Activated CD4-positive, alpha-beta memory T cell treated with anti-CD3 and anti-CD28 coated beads for 36 hours (primary cell): ENCODE measurements at regions of chr7 and their contacts with region 1.

Region 1: DNA sequence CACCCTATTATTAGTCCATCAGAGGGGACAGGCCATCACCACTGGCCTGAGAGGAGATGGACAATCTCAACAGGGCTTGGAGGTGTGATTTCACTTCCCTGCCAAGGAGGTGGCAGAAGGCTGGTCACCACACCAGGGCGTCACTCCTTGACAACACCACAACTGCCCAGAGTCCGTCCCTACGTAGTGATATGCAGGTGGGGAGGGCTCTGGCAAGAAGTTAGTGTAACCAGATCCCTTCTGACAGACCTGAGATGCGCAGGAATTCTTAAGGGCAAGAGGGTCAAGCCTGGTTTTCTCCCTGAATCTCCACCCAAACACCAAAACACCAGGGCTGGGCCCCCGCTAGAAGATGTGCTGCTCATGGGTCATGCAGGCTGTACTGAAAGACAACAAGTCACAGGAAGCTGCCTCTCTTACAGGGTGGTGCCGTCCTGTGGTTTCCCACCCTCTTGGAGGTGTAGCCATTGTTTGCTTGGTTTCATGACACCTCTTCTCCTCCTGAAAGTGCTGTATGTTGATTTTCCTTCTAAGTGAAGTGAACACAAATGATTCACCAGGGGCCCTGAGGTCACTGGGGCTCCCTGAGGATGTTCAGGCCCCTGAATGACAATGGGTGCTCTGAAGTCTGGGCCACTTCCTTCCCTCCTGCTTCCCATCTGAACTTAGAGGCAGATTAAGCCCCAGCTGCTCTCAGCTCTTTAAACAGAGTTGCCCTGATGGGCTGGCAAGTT is 27.1 kb downstream of the ATXN7L1 start:
- DNase-seq: peak; percentile 87
- H3K4me3 Mint-ChIP-seq: peak overlapping the region; percentile 11
- H3K27ac Mint-ChIP-seq: peak overlapping the region; percentile 68
- H3K4me1 Mint-ChIP-seq: peaks cover 46% of the 10 kb centered on the region
- H3K27me3 Mint-ChIP-seq: no peaks in the 10 kb centered on the region

Region 2: GRCh38 chr7:105782391-105783042 is 66.8 kb before region 1 on chr7:
- CTCF ChIA-PET with region 1: no interaction called
- POLR2A ChIA-PET with region 1: no interaction called
- intact Hi-C with region 1: loop called (anchors 1 kb)
- DNase-seq: peak; percentile 80
- H3K4me3 Mint-ChIP-seq: no peak overlapping the region
- H3K27ac Mint-ChIP-seq: no peak overlapping the region
- H3K4me1 Mint-ChIP-seq: peaks cover 14% of the 10 kb centered on the region
- H3K27me3 Mint-ChIP-seq: no peaks in the 10 kb centered on the region

Region 3: DNA sequence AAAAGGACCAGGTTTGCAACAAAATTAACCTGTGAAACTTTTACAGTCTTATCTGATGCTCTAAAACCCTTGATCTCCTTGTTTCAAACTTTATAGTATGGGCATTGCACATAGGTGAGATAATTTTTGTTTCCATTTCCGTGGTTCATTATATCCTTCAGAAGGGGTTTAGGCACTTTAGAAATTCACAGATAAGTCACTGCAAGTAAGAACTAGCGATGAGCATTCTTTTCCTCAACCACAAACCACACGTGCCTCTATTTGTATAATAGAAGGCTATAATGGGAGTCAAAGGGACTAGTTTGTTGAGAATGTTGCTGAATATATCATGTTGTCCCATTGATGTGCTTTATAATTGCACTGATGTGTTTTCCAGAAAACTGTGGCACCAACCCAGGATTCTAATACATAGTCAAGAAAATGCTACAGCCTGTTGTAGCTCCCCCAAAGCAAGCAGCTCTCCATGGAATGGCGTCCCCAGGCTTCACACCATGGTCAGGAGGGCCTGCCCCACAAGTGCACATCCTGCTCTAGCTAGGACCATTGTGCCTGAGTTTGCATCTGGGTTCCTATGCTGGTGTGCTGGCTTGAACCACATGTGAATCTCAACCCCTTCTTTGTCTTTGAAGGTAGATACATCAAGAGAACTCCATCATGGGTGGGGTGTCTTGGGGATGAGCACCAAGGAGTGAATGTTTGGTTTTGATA is 41.2 kb after region 1 on chr7:
- CTCF ChIA-PET with region 1: no interaction called
- POLR2A ChIA-PET with region 1: no interaction called
- intact Hi-C with region 1: loop called (anchors 1 kb)
- DNase-seq: peak; percentile 29
- H3K4me3 Mint-ChIP-seq: no peak overlapping the region
- H3K27ac Mint-ChIP-seq: no peak overlapping the region
- H3K4me1 Mint-ChIP-seq: peaks cover 12% of the 10 kb centered on the region
- H3K27me3 Mint-ChIP-seq: no peaks in the 10 kb centered on the region

Region 4: GRCh38 chr7:105924945-105925344 is 75.7 kb after region 1 on chr7:
- CTCF ChIA-PET with region 1: no interaction called
- POLR2A ChIA-PET with region 1: no interaction called
- intact Hi-C with region 1: loop called (anchors 2 kb)
- DNase-seq: peak; percentile 50
- H3K4me3 Mint-ChIP-seq: no peak overlapping the region
- H3K27ac Mint-ChIP-seq: peak overlapping the region; percentile 53
- H3K4me1 Mint-ChIP-seq: peaks cover 30% of the 10 kb centered on the region
- H3K27me3 Mint-ChIP-seq: peaks cover 2% of the 10 kb centered on the region

Region 5: DNA sequence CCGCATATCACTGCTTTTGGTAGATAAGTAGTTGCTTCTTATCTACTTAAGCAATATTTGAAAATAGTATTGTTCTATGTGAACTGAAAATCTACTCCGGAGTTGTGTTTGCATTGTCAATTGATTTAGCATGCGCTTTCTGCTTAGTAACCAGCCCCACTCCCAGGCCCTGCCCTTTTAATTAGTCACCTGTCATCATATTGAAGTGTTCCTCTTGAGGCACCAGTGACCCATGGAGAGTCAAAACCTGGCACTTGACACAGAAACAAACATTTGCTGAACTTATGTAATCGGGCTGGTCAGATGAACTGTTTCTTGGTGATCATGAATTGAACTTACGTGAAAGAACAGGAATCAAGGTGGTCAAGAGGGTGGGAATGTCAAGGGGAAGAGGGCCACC is 86.0 kb after region 1 on chr7:
- CTCF ChIA-PET with region 1: no interaction called
- POLR2A ChIA-PET with region 1: no interaction called
- intact Hi-C with region 1: no loop called
- DNase-seq: no peak
- H3K4me3 Mint-ChIP-seq: no peak overlapping the region
- H3K27ac Mint-ChIP-seq: no peak overlapping the region
- H3K4me1 Mint-ChIP-seq: peaks cover 9% of the 10 kb centered on the region
- H3K27me3 Mint-ChIP-seq: no peaks in the 10 kb centered on the region